T-cell (primary cell): ENCODE measurements at regions of chr1 and their contacts with region 1.

Region 1: DNA sequence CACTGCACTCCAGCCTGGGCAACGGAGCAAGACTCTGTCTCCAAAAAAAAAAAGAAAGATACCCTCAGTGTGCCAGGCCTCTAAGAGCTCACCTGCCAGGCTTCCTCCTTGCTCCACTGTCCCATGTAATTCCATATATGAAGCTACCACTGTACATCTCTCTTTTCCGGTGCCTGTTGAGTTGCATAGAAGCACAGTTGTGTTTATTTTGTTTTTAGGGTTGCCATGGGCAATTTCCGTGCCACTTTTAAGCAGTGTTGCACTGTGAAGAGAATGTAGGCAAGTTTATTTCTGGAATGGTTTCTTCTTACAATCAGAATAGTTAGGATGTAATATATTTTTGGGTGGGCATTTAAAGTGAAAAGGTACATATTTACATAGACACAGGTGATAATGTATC is 23.3 kb downstream of the MR1 start:
- DNase-seq: no peak
- ATAC-seq: no peak
- H3K4me3 ChIP-seq: no peak overlapping the region
- H3K4me3 Mint-ChIP-seq: no peak overlapping the region
- H3K27ac ChIP-seq: no peak overlapping the region
- H3K27ac Mint-ChIP-seq: no peak overlapping the region
- H3K4me1 ChIP-seq: peaks cover 1 to 2% of the 10 kb centered on the region in 2 experiments
- H3K4me1 Mint-ChIP-seq: peaks cover 12 to 21% (median 13%) of the 10 kb centered on the region in 3 donors
- H3K27me3 ChIP-seq: no peaks in the 10 kb centered on the region
- H3K27me3 Mint-ChIP-seq: no peaks in the 10 kb centered on the region

Region 2: GRCh38 chr1:180623579-180624347 is 433.3 kb before region 1 on chr1:
- CTCF ChIA-PET with region 1: no interaction called
- POLR2A ChIA-PET with region 1: no interaction called
- DNase-seq: no peak
- ATAC-seq: no peak
- H3K4me3 ChIP-seq: no peak overlapping the region
- H3K4me3 Mint-ChIP-seq: no peak overlapping the region
- H3K27ac ChIP-seq: no peak overlapping the region
- H3K27ac Mint-ChIP-seq: no peak overlapping the region
- H3K4me1 ChIP-seq: no peaks in the 10 kb centered on the region
- H3K4me1 Mint-ChIP-seq: no peaks in the 10 kb centered on the region
- H3K27me3 ChIP-seq: peaks cover 0 to 2% of the 10 kb centered on the region in 2 experiments
- H3K27me3 Mint-ChIP-seq: peaks cover 12 to 25% of the 10 kb centered on the region in 2 donors

Region 3: GRCh38 chr1:182029379-182030331 is 972.6 kb after region 1 on chr1:
- CTCF ChIA-PET with region 1: no interaction called
- POLR2A ChIA-PET with region 1: interaction called in 1 of 2 experiments, 17 read pairs
- DNase-seq: peak; percentile 96 to 100 (median 98)
- ATAC-seq: peak; percentile 91 to 93 (median 92)
- H3K4me3 ChIP-seq: peak overlapping the region; percentile 75 to 82
- H3K4me3 Mint-ChIP-seq: peak overlapping the region; percentile 88 to 95 (median 89)
- H3K27ac ChIP-seq: peak overlapping the region; percentile 92
- H3K27ac Mint-ChIP-seq: peak overlapping the region; percentile 97 to 98
- H3K4me1 ChIP-seq: peaks cover 6 to 14% of the 10 kb centered on the region in 2 experiments
- H3K4me1 Mint-ChIP-seq: peaks cover 13 to 16% (median 16%) of the 10 kb centered on the region in 3 donors
- H3K27me3 ChIP-seq: no peaks in the 10 kb centered on the region
- H3K27me3 Mint-ChIP-seq: no peaks in the 10 kb centered on the region